ENCODE measurements at regions of chr9 and their contacts with region 1.

Region 1: DNA sequence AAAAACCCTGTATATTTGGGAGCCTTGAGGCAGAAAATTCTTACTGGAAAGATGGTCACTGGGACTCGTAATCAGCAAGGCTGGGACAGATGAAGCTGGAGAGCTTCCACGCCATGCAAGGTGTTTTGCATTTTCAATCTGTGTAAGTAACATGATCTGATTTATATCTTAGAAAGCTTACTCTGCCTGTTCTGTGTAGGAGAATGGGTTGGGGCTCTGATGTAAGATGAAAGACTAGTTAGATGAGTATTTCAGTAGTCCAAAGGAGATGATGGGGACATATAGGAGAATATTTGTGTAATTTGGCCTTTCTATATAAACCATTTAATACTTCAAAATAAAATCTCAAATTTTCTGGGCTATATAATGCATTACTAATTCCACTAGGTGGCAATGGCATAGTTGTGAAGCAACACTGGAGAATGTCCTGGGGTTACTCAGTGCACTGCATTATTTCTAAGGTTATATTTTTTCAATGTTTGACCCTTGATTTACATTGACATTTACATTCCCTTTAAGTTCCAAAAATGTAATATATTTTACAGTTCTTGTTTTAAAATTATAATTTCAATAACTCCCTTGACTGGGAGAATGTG is 21.9 kb upstream of the FSD1L start:
- H3K4me3 Mint-ChIP-seq: no peak overlapping the region
- H3K27ac Mint-ChIP-seq: no peak overlapping the region
- H3K4me1 Mint-ChIP-seq: no peaks in the 10 kb centered on the region
- H3K27me3 Mint-ChIP-seq: no peaks in the 10 kb centered on the region

Region 2: GRCh38 chr9:105173306-105173705 is 252.6 kb before region 1 on chr9:
- intact Hi-C with region 1: loop called (anchors 5 kb)
- H3K4me3 Mint-ChIP-seq: no peak overlapping the region
- H3K27ac Mint-ChIP-seq: no peak overlapping the region
- H3K4me1 Mint-ChIP-seq: peaks cover 28% of the 10 kb centered on the region
- H3K27me3 Mint-ChIP-seq: peaks cover 4% of the 10 kb centered on the region

Region 3: GRCh38 chr9:105438141-105438806 is 12.3 kb after region 1 on chr9:
- intact Hi-C with region 1: no loop called
- H3K4me3 Mint-ChIP-seq: no peak overlapping the region
- H3K27ac Mint-ChIP-seq: no peak overlapping the region
- H3K4me1 Mint-ChIP-seq: peaks cover 11% of the 10 kb centered on the region
- H3K27me3 Mint-ChIP-seq: no peaks in the 10 kb centered on the region

Region 4: DNA sequence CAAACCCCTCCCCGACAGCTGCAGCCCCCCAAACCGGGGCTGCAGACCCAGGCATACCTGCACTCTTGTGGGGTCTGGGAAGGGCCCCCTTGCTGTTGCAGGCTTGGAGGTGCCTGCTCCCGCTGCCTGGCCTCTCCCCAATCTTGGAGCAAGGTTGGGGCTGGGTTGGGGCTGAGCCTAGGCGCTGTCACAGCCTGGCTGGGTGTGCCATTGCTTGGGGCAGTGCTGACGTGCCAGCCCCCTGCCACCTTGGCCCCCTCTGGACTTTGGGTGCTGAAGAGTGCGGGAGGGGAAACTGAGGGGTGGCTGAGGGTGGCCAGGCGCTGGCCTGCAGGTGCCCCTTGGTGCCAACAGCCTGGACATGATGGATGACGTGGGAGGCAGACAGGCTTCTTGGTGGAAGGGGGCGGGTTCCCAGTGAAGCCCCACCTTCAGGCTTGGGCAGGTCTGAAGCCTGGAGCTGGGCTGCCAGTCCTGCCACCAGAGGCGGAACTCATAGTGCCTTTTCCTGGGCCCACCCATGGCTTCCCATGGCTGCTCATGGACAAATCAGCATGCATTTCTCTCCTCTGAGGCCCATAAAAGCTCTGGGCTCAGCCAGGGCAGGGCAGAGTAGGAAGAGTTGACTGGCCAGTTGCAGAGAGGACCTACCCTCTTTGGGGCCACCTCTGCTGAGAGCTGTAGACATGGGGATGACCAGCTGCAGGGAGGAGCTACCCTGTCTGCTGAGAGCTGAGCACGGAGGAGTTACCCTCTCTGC is 287.5 kb after region 1 on chr9:
- intact Hi-C with region 1: loop called (anchors 5 kb)
- H3K4me3 Mint-ChIP-seq: no peak overlapping the region
- H3K27ac Mint-ChIP-seq: no peak overlapping the region
- H3K4me1 Mint-ChIP-seq: peaks cover 4% of the 10 kb centered on the region
- H3K27me3 Mint-ChIP-seq: no peaks in the 10 kb centered on the region

Measured in dendritic cell treated with granulocyte-macrophage colony-stimulating factor and Interleukin-4, amounts not matched to agents 40 ng/mL and 50 ng/mL, for 4 days (primary cell).